ENCODE measurements at regions of chr4 and their contacts with region 1.

Region 1: GRCh38 chr4:118352843-118353533 is at the start of gene PRSS12:
- DNase-seq: peak; percentile 41
- H3K4me3 ChIP-seq: peak within 1 kb of the TSS; percentile 84
- H3K27ac ChIP-seq: peak within 1 kb of the TSS; percentile 52
- H3K27me3 ChIP-seq: no peaks in the 10 kb centered on the region
- CTCF ChIP-seq: peak; percentile 74
- polyA plus RNA-seq, gene PRSS12: 142 and 155 TPM in 2 replicates

Region 2: DNA sequence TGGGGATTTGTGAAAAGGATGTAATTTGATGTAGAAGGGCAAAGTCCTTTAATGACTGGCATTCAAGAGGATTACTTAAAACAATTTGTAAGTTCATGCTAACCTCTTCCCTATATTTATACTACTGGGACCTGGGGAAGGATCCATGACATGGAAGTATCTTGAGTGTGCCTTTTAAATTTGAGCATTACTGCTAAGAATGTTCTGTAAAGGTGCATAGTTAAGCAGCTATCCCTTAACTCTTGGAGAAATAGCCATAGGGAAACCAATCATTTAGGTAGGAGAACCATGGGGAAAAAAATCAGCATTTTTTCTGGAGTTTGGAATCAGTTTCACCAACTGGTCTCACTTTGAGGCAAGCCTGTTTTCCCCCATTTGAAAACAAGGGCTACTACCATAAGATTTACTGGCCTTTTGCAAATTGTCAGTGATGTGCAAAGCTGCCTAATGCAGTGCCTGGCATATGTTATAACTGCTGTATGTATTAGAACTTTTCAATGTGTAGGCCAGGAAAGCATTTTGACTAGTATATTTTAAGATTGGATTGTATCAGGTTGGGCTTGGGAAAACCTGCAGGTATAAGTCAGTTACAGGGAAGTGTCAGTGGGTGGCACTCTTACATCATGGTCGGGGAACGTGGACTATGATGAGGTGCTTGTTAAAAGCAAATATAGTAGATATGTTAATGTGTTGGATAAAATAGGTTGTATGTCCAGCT is 72.3 kb before region 1 on chr4:
- CTCF ChIA-PET with region 1: interaction called, 23 read pairs
- POLR2A ChIA-PET with region 1: interaction called, 25 read pairs
- DNase-seq: peak; percentile 48
- H3K4me3 ChIP-seq: peak overlapping the region; percentile 87
- H3K27ac ChIP-seq: no peak overlapping the region
- H3K27me3 ChIP-seq: no peaks in the 10 kb centered on the region
- CTCF ChIP-seq: peak; percentile 58

Region 3: GRCh38 chr4:118313098-118313497 is 39.9 kb before region 1 on chr4:
- CTCF ChIA-PET with region 1: interaction called, 13 read pairs
- POLR2A ChIA-PET with region 1: no interaction called
- DNase-seq: no peak
- H3K4me3 ChIP-seq: no peak overlapping the region
- H3K27ac ChIP-seq: no peak overlapping the region
- H3K27me3 ChIP-seq: no peaks in the 10 kb centered on the region
- CTCF ChIP-seq: no peak

Region 4: GRCh38 chr4:118338981-118339765 is 13.8 kb before region 1 on chr4:
- CTCF ChIA-PET with region 1: interaction called, 81 read pairs
- POLR2A ChIA-PET with region 1: interaction called, 5 read pairs
- DNase-seq: peak; percentile 67
- H3K4me3 ChIP-seq: no peak overlapping the region
- H3K27ac ChIP-seq: peak overlapping the region; percentile 88
- H3K27me3 ChIP-seq: no peaks in the 10 kb centered on the region
- CTCF ChIP-seq: no peak

Region 5: GRCh38 chr4:118373614-118374255 is 20.7 kb after region 1 on chr4:
- CTCF ChIA-PET with region 1: interaction called, 32 read pairs
- POLR2A ChIA-PET with region 1: interaction called, 5 read pairs
- DNase-seq: peak; percentile 42
- H3K4me3 ChIP-seq: no peak overlapping the region
- H3K27ac ChIP-seq: no peak overlapping the region
- H3K27me3 ChIP-seq: no peaks in the 10 kb centered on the region
- CTCF ChIP-seq: no peak

Region 6: GRCh38 chr4:118396881-118397622 is 44.1 kb after region 1 on chr4:
- CTCF ChIA-PET with region 1: interaction called, 10 read pairs
- POLR2A ChIA-PET with region 1: interaction called, 4 read pairs
- DNase-seq: no peak
- H3K4me3 ChIP-seq: no peak overlapping the region
- H3K27ac ChIP-seq: no peak overlapping the region
- H3K27me3 ChIP-seq: no peaks in the 10 kb centered on the region
- CTCF ChIP-seq: no peak

Measured in AG04450 (cell line).